Activated CD8-positive, alpha-beta T cell treated with anti-CD3 and anti-CD28 coated beads for 36 hours (primary cell): ENCODE measurements at regions of chr18 and their contacts with region 1.

Region 1: DNA sequence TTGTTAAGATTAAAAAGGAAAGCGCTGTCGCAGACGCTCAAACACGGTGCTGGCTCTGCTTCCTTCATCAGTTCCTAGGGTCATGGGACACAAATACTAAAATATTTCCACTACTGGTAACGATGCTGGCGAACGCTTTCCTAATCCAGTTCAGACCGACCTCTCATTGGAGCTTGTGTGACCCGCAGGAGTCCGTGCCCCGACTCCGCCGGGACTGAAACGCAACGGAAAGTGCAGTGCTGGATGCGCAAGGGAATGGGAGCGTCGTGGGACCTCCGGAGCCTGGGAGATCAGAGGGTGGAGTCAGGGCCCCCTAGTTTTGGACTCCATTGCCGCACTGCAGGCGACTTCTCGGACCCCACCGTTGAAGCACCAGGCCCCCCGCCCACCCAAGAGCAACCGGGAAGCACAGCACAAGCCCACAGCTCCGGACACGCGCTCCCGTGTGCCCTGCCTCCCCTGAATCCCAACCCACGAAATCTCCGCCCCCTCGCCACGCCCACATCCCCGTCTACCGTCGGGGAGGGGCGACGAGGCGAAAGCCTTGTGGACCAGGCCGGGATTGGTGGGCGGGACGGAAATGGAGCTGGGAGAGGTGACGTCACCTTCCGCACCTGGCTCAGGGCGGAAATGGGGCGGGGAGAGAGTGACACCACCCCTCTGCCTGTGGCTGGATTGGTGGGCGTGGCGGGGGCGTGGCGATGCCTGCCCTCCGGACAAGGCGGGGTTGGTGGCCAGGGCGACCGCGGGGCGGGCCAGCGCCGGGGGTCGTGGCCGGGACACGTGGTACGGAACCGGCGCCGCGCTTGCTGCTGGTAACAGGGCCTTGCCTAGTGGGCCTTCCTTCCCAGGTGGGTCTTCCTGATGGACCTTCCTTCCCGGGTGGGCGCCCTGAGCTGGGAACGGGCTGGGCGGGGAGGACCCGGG is at the start of gene CNDP2:
- DNase-seq: peak; percentile 100
- ATAC-seq: peak; percentile 80
- H3K4me3 Mint-ChIP-seq: peak within 1 kb of the TSS; percentile 85
- H3K27ac Mint-ChIP-seq: peak within 1 kb of the TSS; percentile 99
- H3K4me1 Mint-ChIP-seq: peaks cover 41% of the 10 kb centered on the region
- H3K27me3 Mint-ChIP-seq: no peaks in the 10 kb centered on the region
- CTCF ChIP-seq: no peak
- total RNA-seq, gene CNDP2: 121 to 136 TPM

Region 2: DNA sequence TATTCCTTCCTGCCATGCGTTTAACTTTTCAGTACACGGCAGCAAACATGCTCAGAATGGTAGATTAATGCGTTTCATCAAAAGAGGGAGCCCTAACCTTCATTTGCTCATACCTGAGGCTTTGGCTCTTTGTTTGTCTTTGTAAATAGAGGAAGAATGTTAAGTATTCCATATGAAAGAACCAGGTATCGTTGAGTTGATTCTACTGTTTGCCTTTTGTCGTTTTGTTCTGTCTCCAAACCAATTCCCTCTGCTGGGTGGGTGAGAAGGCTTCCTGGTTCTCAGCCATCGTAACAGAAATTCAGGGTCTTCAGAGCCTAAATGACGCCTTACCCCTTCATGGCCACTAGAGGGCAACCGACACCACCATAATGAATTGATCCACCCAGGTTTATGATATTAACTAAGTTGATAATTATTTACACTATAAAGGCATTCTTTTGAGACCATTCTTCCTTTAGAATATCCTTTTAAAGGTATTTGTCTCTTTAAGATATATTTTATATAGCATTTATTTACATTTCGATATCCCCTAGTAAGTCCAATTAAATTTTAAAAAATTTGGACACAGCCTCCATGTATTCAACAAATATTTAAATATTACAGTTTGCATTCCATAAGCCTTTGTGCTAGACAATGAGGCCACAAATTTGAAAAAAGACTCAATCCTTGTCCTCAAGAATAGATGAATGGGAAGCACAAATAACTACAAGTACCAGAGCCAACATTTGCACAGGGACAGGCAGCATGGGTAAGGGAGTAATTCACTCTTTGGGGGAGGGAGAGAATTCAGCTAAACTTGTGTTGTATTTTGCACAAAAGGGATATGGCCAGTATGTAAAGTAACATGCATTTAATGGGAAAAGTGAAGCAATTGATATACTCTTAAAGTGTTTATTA is 299.4 kb before region 1 on chr18:
- CTCF ChIA-PET with region 1: interaction called, 29 read pairs
- POLR2A ChIA-PET with region 1: no interaction called
- intact Hi-C with region 1: loop called (anchors 5 kb)
- DNase-seq: peak; percentile 65
- ATAC-seq: peak; percentile 99
- H3K4me3 Mint-ChIP-seq: peak overlapping the region; percentile 75
- H3K27ac Mint-ChIP-seq: peak overlapping the region; percentile 79
- H3K4me1 Mint-ChIP-seq: peaks cover 4% of the 10 kb centered on the region
- H3K27me3 Mint-ChIP-seq: peaks cover 2% of the 10 kb centered on the region
- CTCF ChIP-seq: peak; percentile 88

Region 3: GRCh38 chr18:74342416-74343043 is 153.3 kb before region 1 on chr18:
- CTCF ChIA-PET with region 1: interaction called, 198 read pairs
- POLR2A ChIA-PET with region 1: interaction called, 4 read pairs
- intact Hi-C with region 1: no loop called
- DNase-seq: peak; percentile 49
- ATAC-seq: no peak
- H3K4me3 Mint-ChIP-seq: no peak overlapping the region
- H3K27ac Mint-ChIP-seq: no peak overlapping the region
- H3K4me1 Mint-ChIP-seq: no peaks in the 10 kb centered on the region
- H3K27me3 Mint-ChIP-seq: peaks cover 2% of the 10 kb centered on the region
- CTCF ChIP-seq: peak; percentile 69

Region 4: DNA sequence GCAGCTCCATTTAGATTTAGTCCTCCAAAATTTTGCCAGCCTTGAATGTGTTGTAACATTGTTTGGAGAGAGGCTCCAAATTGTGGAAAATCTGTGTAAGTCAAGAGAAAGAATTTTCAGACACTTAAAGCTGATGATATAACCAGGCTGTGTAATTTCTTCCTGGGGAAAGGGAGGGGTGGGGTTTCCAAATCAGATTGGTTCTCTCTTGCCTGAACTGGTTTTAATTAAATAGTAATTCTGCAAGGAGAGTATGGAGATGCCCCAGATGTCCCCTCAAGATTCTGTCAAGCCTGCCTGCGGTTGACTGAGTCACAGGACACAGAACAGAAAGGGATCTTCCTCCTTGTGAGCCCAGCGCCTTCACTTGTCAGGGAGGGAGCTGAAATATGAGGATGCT is 125.7 kb before region 1 on chr18:
- CTCF ChIA-PET with region 1: interaction called, 14 read pairs
- POLR2A ChIA-PET with region 1: interaction called, 3 read pairs
- intact Hi-C with region 1: loop called (anchors 5 kb)
- DNase-seq: peak; percentile 34
- ATAC-seq: peak; percentile 35
- H3K4me3 Mint-ChIP-seq: no peak overlapping the region
- H3K27ac Mint-ChIP-seq: no peak overlapping the region
- H3K4me1 Mint-ChIP-seq: peaks cover 47% of the 10 kb centered on the region
- H3K27me3 Mint-ChIP-seq: peaks cover 6% of the 10 kb centered on the region
- CTCF ChIP-seq: no peak

Region 5: GRCh38 chr18:74563999-74564398 is 68.2 kb after region 1 on chr18:
- CTCF ChIA-PET with region 1: no interaction called
- POLR2A ChIA-PET with region 1: no interaction called
- intact Hi-C with region 1: no loop called
- DNase-seq: no peak
- ATAC-seq: no peak
- H3K4me3 Mint-ChIP-seq: no peak overlapping the region
- H3K27ac Mint-ChIP-seq: no peak overlapping the region
- H3K4me1 Mint-ChIP-seq: no peaks in the 10 kb centered on the region
- H3K27me3 Mint-ChIP-seq: peaks cover 10% of the 10 kb centered on the region
- CTCF ChIP-seq: no peak

Region 6: DNA sequence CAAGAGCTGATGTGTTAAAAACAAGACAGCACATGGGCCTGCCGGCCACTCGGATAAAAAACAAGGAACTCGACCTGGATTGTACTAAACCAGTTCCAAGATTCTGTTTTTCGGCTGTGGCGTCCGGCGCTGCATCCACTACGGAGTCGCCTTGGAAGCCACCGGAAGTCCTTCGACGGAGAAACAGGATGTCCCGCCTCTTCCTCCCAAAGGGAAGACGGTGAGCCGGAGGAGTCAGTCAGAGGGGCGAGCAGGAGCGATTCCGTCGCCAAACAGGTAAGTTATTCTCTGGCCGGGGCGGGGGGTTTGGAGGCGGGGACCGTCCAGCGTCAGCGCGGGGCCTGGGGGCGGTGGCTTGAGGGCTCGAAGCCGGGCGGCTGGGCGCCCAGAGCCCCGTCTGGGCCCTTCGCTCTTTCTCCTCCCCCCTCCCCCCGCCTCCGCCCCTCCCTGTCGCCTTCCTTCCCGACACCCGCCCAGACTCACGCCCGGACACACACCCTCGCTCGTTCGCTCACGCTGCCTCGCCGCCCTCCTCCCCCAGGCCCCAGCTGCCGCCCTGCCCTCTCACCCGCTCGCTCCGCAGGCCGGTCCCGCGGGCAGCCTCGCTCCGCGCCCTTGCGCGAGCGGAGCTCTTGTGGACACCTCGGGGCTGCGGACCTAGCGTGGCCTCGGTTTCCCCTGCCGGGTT is 102.0 kb after region 1 on chr18 and contains the start of gene ZNF407:
- CTCF ChIA-PET with region 1: interaction called, 5 read pairs
- POLR2A ChIA-PET with region 1: interaction called, 3 read pairs
- intact Hi-C with region 1: loop called (anchors 10 kb)
- DNase-seq: peak; percentile 88
- ATAC-seq: peak; percentile 80
- H3K4me3 Mint-ChIP-seq: peak within 1 kb of the TSS; percentile 94
- H3K27ac Mint-ChIP-seq: peak within 1 kb of the TSS; percentile 98
- H3K4me1 Mint-ChIP-seq: peaks cover 33% of the 10 kb centered on the region
- H3K27me3 Mint-ChIP-seq: no peaks in the 10 kb centered on the region
- CTCF ChIP-seq: no peak
- total RNA-seq, gene ZNF407: 9.9 to 10.8 TPM

Region 7: DNA sequence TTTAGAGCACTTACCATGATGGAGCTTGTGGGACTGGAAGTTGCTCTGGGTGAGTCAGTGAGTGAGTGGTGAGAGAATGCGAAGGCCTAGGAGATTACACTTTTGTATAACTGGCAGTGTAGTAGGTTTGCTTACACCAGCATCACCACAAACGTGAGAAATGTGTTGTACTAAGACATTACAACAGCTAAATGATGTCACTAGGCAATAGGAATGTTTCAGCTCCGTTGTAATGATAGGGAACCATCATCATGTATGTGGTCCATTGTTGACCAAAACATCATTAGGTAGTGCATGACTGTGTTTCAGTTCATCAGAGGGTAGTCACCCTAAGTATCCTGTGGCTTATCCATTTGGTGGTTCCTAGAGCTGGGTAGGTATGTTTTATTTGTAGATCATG is 113.7 kb after region 1 on chr18:
- CTCF ChIA-PET with region 1: no interaction called
- POLR2A ChIA-PET with region 1: no interaction called
- intact Hi-C with region 1: no loop called
- DNase-seq: no peak
- ATAC-seq: peak; percentile 53
- H3K4me3 Mint-ChIP-seq: no peak overlapping the region
- H3K27ac Mint-ChIP-seq: no peak overlapping the region
- H3K4me1 Mint-ChIP-seq: peaks cover 21% of the 10 kb centered on the region
- H3K27me3 Mint-ChIP-seq: no peaks in the 10 kb centered on the region
- CTCF ChIP-seq: no peak